ENCODE measurements at regions of chr20 and their contacts with region 1.

Region 1: DNA sequence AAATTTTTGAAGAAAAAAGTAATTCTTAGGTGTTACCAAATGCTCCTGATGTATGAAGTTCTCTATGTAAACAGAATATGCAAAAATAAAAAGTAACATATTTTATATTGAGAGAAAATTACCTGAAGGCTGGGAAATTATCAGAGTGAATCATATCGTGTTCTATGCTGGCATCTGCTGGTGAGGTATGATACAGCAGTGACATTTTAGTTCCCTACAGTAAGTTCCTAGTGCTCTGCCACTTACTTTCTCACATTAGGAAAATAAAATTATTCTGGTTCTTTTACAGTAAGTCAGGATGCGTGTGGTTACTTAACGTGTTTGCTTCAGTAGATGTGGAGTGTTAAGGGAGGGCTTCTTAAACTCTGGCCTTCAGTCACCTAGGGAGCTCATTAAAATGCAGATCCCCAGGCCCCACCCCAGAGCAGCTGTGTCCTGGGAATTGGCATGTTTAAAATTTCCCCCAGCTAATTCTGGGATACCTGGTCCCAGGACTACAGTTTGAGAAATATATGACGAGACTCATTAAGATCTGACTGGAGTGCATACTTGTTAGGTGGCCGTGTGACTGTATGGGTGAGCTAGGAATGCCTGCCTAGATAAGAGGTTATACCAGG is 3.2 kb downstream of the ACTR5 start:
- DNase-seq: peak; percentile 63

Region 2: GRCh38 chr20:38534756-38535155 is 216.7 kb before region 1 on chr20:
- in situ Hi-C with region 1: no loop called
- DNase-seq: no peak

Region 3: GRCh38 chr20:38674092-38674764 is 77.2 kb before region 1 on chr20:
- in situ Hi-C with region 1: loop called (anchors 25 kb)
- DNase-seq: peak; percentile 42